GM10248 (cell line): ENCODE measurements at regions of chr2 and their contacts with region 1.

Region 1: GRCh38 chr2:196750982-196751635 is 48.4 kb downstream of the GTF3C3 start:
- DNase-seq: peak; percentile 66
- CTCF ChIP-seq: peak; percentile 82

Region 2: DNA sequence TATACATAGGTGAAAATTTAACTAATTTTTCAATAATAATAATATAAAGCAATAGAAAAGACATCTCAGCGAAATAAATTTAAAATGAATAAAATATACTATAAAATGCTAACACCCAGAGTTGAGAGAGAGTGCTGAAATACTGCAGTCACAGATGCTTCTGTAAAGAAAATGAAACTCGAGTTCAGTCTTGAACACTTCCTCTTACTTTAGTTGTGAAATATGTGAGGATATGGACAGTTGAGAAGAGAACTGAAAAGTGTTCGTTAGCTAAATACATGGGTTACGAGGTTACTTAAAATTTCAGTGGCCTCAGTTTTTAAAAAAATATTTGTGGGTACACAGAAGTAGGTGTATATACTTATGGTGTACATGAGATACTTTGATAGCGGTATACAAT is 789.2 kb before region 1 on chr2:
- CTCF ChIA-PET with region 1: no interaction called
- POLR2A ChIA-PET with region 1: no interaction called
- DNase-seq: peak; percentile 48
- CTCF ChIP-seq: no peak

Region 3: GRCh38 chr2:196719110-196719872 is 31.8 kb before region 1 on chr2:
- CTCF ChIA-PET with region 1: interaction called, 10 read pairs
- POLR2A ChIA-PET with region 1: no interaction called
- DNase-seq: peak; percentile 15
- CTCF ChIP-seq: no peak

Region 4: GRCh38 chr2:196725882-196726281 is 25.2 kb before region 1 on chr2:
- CTCF ChIA-PET with region 1: interaction called, 19 read pairs
- POLR2A ChIA-PET with region 1: no interaction called
- DNase-seq: no peak
- CTCF ChIP-seq: no peak

Region 5: GRCh38 chr2:196767101-196767500 is 16.0 kb after region 1 on chr2:
- CTCF ChIA-PET with region 1: interaction called, 55 read pairs
- POLR2A ChIA-PET with region 1: no interaction called
- DNase-seq: no peak
- CTCF ChIP-seq: no peak

Region 6: GRCh38 chr2:196783431-196784094 is 32.5 kb after region 1 on chr2:
- CTCF ChIA-PET with region 1: interaction called, 13 read pairs
- POLR2A ChIA-PET with region 1: no interaction called
- DNase-seq: peak; percentile 18
- CTCF ChIP-seq: no peak